Dorsolateral prefrontal cortex (tissue), 120 donors: ENCODE measurements at regions of chr9 and their contacts with region 1.

Region 1: GRCh38 chr9:132141344-132141947 is 20.4 kb upstream of the NTNG2 start:
- DNase-seq: peak in 6 of 10 donors; percentile 30 to 67 (median 45)
- H3K4me3 ChIP-seq: peak overlapping the region; percentile 5 to 69 (median 47)
- H3K27ac ChIP-seq: peak overlapping the region in 58 of 59 donors; percentile 8 to 91 (median 79)
- H3K27me3 ChIP-seq: peaks cover 0 to 4% (median 0%) of the 10 kb centered on the region in 45 donors
- CTCF ChIP-seq: peak in 3 of 56 donors; percentile 11 to 22 (median 16)

Region 2: GRCh38 chr9:132026932-132027585 is 114.4 kb before region 1 on chr9:
- intact Hi-C with region 1: loop called in 1 of 2 experiments (anchors 10 kb)
- DNase-seq: no peak
- H3K4me3 ChIP-seq: no peak overlapping the region
- H3K27ac ChIP-seq: peak overlapping the region in 2 of 59 donors; percentile 10 to 42
- H3K27me3 ChIP-seq: no peaks in the 10 kb centered on the region
- CTCF ChIP-seq: no peak

Region 3: DNA sequence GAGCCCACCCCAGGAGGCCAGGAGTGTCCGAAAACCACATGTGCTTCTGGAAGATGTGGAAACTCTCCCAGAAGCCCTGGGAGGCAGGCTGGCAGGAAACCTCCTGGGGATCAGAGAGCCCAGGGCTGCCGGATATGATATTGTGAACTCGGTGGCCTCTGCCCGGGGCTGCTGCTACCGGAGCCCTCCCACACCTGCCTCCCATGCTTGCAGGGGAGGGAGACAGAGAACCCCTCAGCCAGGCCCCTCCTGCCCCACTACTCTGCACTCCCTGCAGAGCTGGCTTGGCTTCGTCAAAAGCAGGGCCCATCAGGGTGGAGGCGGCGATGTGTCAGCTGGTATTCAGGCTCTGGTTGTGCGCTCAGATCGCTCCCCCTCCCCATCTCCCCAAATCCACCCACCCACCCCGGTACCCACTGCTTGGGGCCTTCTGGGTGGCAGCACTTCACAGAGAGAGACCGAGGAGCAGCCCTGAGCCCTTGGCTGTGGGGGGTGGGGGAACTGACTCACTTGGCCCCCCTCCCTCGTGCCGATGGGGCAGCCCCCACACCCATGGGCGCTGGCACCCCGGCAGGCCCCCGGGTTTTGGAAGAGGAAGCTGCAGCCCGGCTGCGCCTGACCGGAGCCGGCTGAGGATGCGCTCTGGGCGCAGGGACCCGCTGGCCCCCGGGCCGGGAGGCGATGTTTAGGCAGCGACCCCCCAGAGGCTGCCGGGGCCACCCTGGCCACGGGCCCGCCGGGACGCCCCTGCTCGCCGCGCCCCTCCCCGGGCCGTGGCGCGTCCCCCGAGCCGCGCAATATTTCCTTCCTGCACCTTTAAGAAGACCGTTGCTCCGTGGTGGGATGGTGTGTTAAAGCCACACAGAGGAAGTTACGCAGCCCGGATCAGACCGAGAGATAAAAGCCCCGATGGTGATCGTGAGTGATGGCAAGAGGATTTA is 19.6 kb after region 1 on chr9:
- intact Hi-C with region 1: loop called in 1 of 2 experiments (anchors 1 kb)
- DNase-seq: peak in 2 of 10 donors; percentile 49 to 67
- H3K4me3 ChIP-seq: peak overlapping the region; percentile 46 to 91 (median 77)
- H3K27ac ChIP-seq: peak overlapping the region in 44 of 59 donors; percentile 23 to 84 (median 60)
- H3K27me3 ChIP-seq: peaks cover 0 to 7% (median 0%) of the 10 kb centered on the region in 45 donors
- CTCF ChIP-seq: no peak

Region 4: GRCh38 chr9:132472199-132472598 is 330.8 kb after region 1 on chr9:
- intact Hi-C with region 1: no loop called
- DNase-seq: no peak
- H3K4me3 ChIP-seq: no peak overlapping the region
- H3K27ac ChIP-seq: no peak overlapping the region
- H3K27me3 ChIP-seq: peaks cover 0 to 13% (median 0%) of the 10 kb centered on the region in 45 donors
- CTCF ChIP-seq: no peak